ENCODE measurements at regions of chr1 and their contacts with region 1.

Region 1: GRCh38 chr1:31422505-31423319 is 9.7 kb downstream of the SERINC2 start:
- DNase-seq: peak in 1 of 2 experiments; percentile 95
- H3K4me3 ChIP-seq: no peak overlapping the region
- H3K27ac ChIP-seq: no peak overlapping the region
- H3K4me1 ChIP-seq: peaks cover 0 to 3% (median 2%) of the 10 kb centered on the region in 4 experiments; a peak in 1 of 7 replicates
- H3K27me3 ChIP-seq: no peaks in the 10 kb centered on the region
- CTCF ChIP-seq: peak; percentile 88 to 98 (median 88)
- EP300 ChIP-seq: no peak
- POLR2A ChIP-seq: no peak
- RAD21 ChIP-seq: peak; percentile 95 to 97

Region 2: GRCh38 chr1:31372961-31373896 is 49.5 kb before region 1 on chr1 and contains the start of gene FABP3:
- CTCF ChIA-PET with region 1: interaction called, 21 read pairs
- POLR2A ChIA-PET with region 1: interaction called, 4 read pairs
- DNase-seq: peak; percentile 85 to 91
- H3K4me3 ChIP-seq: peak within 1 kb of the TSS; percentile 33 to 65 (median 58)
- H3K27ac ChIP-seq: peak within 1 kb of the TSS; percentile 72; the same call in 1 of the 2 replicates
- H3K4me1 ChIP-seq: peaks cover 8 to 27% (median 24%) of the 10 kb centered on the region in 4 experiments
- H3K27me3 ChIP-seq: 0 out of 7 replicates have a peak, but pooled peaks cover 0 to 2% (median 0%) of the 10 kb centered on the region in 4 experiments
- CTCF ChIP-seq: no peak
- EP300 ChIP-seq: no peak; a peak in 1 of 3 replicates
- POLR2A ChIP-seq: peak; percentile 74 to 96
- RAD21 ChIP-seq: peak in 1 of 2 experiments; percentile 10; a peak in 1 of 4 replicates
- total RNA-seq, gene FABP3: 31.4 and 34.8 TPM in 2 replicates

Region 3: DNA sequence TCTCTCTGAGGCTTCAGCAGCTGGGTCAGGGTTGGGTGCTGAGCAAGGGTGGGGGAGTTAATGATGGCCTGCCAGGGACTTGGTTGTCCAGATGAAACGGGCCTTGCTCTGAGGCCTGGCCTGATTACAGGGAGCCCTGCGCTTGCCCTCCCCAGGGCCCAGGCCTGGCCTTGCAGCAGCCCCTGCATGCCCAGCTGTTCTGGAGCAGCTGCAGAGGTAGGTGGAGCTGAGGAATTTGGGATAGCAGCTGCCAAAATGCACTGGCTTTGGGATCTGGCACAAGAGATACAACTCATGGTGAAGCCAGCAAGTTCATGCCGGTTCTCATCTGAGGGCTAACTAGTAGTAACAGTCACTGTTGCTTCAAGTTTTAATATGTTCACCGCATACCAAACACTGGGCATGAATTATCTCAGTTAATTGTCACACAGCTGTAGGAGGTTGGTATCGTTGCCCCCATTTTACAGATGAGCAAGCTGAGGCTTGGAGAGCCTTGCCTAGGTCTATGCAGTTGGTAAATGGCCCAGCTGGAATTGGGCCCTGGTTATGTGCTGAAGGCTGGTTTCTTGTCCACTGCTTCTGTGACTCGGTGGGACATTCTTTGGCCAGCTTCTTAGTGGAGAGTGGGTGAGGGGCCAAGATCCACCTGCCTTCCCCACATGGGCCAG is 17.0 kb before region 1 on chr1:
- CTCF ChIA-PET with region 1: interaction called, 415 read pairs
- POLR2A ChIA-PET with region 1: interaction called, 3 read pairs
- DNase-seq: no peak
- H3K4me3 ChIP-seq: no peak overlapping the region
- H3K27ac ChIP-seq: no peak overlapping the region
- H3K4me1 ChIP-seq: peaks cover 0 to 3% (median 0%) of the 10 kb centered on the region in 4 experiments; a peak in 2 of 7 replicates
- H3K27me3 ChIP-seq: no peaks in the 10 kb centered on the region
- CTCF ChIP-seq: no peak
- EP300 ChIP-seq: no peak
- POLR2A ChIP-seq: no peak
- RAD21 ChIP-seq: no peak

Region 4: DNA sequence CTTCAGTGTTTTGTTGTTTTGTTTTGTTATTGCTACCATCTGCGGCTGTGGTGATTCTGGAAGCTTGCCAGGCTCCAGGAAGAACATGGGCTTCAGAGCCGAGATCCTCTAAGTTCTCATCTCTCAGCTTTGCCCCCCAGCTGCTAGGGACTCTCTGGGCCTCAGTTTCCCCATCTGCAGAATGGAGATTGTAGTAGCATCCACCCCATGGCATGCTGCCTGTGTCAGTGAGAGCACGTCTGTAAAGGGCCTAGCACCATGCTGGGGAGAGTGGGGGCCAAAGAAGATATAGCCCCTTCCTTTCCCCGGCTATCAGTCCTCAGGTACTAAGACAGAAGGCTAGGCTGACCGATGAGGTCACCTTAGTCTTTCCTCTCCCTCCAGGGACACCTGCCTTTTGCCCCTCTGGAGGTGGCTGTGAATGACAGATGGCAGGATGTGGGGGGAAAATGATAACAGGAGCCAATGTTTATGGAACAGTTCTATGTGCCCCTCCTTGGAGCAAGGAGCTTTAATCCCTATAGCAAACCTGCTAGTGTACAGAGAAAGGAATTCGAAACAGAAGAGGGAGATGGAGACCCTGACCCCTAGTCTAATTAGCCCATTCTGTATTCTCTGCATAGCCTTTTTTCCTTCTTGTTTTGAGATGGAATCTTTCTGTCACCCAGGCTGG is 18.2 kb after region 1 on chr1:
- CTCF ChIA-PET with region 1: interaction called, 19 read pairs
- POLR2A ChIA-PET with region 1: interaction called, 4 read pairs
- DNase-seq: no peak
- H3K4me3 ChIP-seq: no peak overlapping the region
- H3K27ac ChIP-seq: no peak overlapping the region
- H3K4me1 ChIP-seq: no peaks in the 10 kb centered on the region; a peak in 2 of 7 replicates
- H3K27me3 ChIP-seq: no peaks in the 10 kb centered on the region
- CTCF ChIP-seq: no peak
- EP300 ChIP-seq: no peak
- POLR2A ChIP-seq: no peak
- RAD21 ChIP-seq: no peak

Region 5: GRCh38 chr1:31487143-31487542 is 64.4 kb after region 1 on chr1:
- CTCF ChIA-PET with region 1: no interaction called
- POLR2A ChIA-PET with region 1: no interaction called
- DNase-seq: no peak
- H3K4me3 ChIP-seq: no peak overlapping the region
- H3K27ac ChIP-seq: no peak overlapping the region
- H3K4me1 ChIP-seq: peaks cover 0 to 12% (median 2%) of the 10 kb centered on the region in 4 experiments; a peak in 6 of 7 replicates
- H3K27me3 ChIP-seq: no peaks in the 10 kb centered on the region
- CTCF ChIP-seq: no peak
- EP300 ChIP-seq: no peak
- POLR2A ChIP-seq: no peak
- RAD21 ChIP-seq: no peak

Region 6: DNA sequence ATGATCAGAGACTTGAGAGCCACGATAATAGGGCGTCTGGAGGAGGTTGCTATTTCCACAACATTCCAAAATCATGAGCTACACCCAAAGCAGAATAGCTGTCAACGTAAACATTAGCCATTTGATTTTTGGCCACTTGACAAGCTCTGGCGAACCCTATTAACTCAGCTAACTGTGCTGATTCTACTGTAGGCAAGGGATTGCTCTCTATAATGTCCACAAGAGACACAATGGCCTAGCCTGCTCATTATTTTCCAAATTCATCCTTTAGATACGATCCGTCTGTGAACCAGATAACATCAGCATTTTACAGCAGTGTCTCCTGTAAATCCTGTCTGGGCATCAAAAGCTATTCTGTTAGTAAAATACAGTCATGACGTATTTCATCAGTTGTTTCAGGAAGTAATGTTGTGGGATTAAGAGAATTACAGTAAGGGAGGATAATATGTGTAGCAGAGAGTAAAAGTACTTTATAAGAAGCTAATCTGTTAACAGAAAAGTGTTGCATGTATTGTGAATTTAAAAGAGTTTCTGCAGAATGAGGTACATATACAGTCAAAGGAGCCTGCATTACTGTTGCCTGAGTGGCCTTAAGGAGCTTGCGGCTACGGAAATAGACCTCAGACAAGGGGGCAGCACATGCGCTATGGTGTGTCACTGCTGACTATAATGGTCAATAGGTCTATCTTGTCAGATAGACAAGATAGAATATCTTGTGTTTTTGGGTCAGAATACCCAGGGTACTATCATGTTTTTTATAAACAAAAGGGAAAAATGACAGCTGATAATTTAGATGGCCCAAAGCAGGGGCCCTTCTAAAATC is 108.7 kb after region 1 on chr1:
- CTCF ChIA-PET with region 1: interaction called, 22 read pairs
- POLR2A ChIA-PET with region 1: no interaction called
- DNase-seq: no peak
- H3K4me3 ChIP-seq: no peak overlapping the region
- H3K27ac ChIP-seq: no peak overlapping the region
- H3K4me1 ChIP-seq: no peaks in the 10 kb centered on the region
- H3K27me3 ChIP-seq: no peaks in the 10 kb centered on the region
- CTCF ChIP-seq: no peak
- EP300 ChIP-seq: no peak
- POLR2A ChIP-seq: no peak
- RAD21 ChIP-seq: no peak

Region 7: DNA sequence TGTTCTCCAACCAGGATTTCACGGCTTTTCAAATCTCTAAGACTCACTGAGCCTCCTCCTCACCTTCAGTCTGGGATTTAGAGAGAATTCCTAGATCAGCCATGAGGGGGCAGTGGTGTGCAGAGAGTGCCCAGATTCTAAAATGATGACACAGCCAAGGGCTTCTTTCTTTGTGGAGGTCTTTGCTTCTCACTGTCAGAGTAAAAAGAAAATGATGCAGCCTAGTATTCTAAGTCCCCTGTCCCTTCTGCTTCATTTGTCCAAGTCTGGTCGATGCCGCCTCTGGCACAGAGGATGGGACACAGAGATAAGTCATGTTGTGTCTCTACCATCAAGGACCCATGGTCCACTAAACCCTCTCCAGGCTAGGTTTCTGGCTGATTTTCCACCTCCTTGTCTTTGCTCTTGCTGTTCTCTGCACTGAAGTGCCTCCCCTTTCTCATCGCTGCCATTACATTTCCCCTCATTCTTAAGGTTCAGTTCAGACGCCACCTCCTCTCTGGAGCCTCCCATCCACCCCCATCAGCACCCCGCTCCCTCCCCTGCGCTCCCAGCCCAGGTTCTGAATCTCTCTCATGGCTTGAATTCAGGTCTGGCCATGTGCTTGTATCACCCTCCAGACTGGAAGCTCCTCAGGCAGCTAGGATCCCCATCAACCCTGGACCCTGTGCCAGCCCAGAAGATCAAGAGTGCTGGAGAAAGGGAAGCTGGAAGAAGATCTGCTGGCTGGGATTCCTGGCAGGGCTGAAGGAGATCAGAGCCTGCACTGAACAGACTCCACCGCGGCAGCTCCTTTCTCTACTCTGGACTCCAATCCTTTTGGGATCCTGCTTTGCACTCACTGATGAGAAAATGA is 141.7 kb after region 1 on chr1:
- CTCF ChIA-PET with region 1: interaction called, 11 read pairs
- POLR2A ChIA-PET with region 1: no interaction called
- DNase-seq: peak in 1 of 2 experiments; percentile 94
- H3K4me3 ChIP-seq: no peak overlapping the region
- H3K27ac ChIP-seq: no peak overlapping the region
- H3K4me1 ChIP-seq: peaks cover 0 to 9% (median 6%) of the 10 kb centered on the region in 4 experiments; a peak in 5 of 7 replicates
- H3K27me3 ChIP-seq: no peaks in the 10 kb centered on the region
- CTCF ChIP-seq: peak; percentile 23 to 83 (median 80)
- EP300 ChIP-seq: no peak
- POLR2A ChIP-seq: no peak
- RAD21 ChIP-seq: peak; percentile 89 to 91

Measured in H1 (cell line).